K562 (cell line): ENCODE measurements at regions of chr15 and their contacts with region 1.

Region 1: DNA sequence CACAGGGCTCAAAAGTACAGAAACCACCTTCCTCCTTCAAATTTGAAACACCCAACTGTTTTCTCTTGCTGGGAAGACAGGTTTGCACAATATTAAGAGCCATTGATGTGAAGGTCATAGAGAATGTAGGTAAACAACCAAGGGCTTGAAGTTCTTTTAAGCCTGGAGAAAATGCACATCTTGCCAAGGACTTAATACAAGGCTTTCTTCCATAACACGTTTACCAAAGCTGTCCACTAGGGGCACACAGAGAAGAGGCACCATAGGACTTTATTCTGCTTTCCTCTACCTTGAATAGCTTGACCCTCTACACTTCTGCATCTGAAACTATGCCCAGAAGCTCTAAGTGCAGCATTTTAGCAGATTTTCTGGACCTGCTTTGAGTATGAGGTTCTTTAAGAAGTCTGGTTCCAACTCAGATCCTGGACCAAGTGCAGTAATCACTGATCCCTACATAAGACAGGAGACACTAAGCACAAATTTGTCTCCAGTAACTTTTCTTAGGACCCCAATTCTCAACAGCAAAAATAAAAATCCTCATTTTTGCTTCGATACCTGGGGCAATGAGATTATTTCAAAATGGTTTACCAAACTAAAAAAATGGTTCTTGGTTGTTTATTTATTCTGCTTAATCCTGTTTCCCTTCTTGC is 138.0 kb downstream of the FBN1 start:
- DNase-seq: peak; percentile 22 to 62 (median 33)
- ATAC-seq: peak; percentile 95
- H3K4me3 ChIP-seq: no peak overlapping the region
- H3K27ac ChIP-seq: no peak overlapping the region
- H3K4me1 ChIP-seq: no peaks in the 10 kb centered on the region
- H3K27me3 ChIP-seq: no peaks in the 10 kb centered on the region; a peak in 1 of 5 replicates
- CTCF ChIP-seq: peak; percentile 49 to 70 (median 66); a peak in 5 of 6 replicates
- EP300 ChIP-seq: no peak
- POLR2A ChIP-seq: no peak
- RAD21 ChIP-seq: peak; percentile 26 to 52

Region 2: DNA sequence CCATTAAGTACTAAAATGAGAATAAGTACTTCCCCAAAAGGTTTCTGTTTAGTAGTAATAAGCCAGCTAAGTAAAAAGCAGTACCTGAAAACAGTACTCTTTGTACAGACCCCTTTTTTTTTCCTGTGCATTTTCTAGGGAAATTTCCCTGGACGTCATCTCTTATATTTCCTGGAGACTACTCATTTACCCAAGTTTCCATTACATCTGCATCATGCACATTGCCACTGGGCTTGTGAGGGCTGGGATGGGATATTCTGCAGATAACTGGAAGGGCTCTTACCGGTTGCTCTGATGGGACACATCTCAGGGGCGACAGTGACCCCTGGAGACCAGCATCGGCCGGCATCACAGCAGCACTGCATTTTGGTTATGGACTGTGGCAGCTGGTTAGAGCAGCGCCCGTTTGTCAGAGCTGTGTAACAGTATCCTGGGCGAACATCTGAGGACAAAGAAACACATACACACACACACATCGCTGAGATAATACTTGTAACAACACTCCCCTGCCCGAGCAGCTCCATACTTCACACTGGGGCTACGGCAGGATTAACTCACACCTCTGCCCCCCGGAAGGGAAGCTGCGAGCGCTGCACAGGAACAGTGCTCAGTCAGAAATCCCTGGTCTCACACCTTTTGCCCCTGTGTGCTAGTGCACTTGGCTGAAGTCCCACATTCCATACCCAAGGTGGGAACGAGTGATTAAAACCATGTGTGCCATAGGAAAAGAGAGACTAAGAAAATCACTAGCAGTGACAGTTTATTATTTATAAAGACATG is 13.0 kb after region 1 on chr15:
- CTCF ChIA-PET with region 1: no interaction called
- POLR2A ChIA-PET with region 1: no interaction called
- in situ Hi-C with region 1: no loop called
- intact Hi-C with region 1: no loop called
- DNase-seq: peak in 2 of 4 experiments; percentile 15 to 34
- ATAC-seq: peak; percentile 90
- H3K4me3 ChIP-seq: no peak overlapping the region
- H3K27ac ChIP-seq: no peak overlapping the region
- H3K4me1 ChIP-seq: no peaks in the 10 kb centered on the region
- H3K27me3 ChIP-seq: no peaks in the 10 kb centered on the region; a peak in 1 of 5 replicates
- CTCF ChIP-seq: peak; percentile 38 to 47 (median 41); a peak in 5 of 6 replicates
- EP300 ChIP-seq: no peak
- POLR2A ChIP-seq: no peak
- RAD21 ChIP-seq: peak in 1 of 2 experiments; percentile 48; a peak in 2 of 4 replicates

Region 3: GRCh38 chr15:48559285-48559684 is 51.7 kb after region 1 on chr15:
- CTCF ChIA-PET with region 1: no interaction called
- POLR2A ChIA-PET with region 1: no interaction called
- in situ Hi-C with region 1: no loop called
- intact Hi-C with region 1: no loop called
- DNase-seq: no peak
- ATAC-seq: no peak
- H3K4me3 ChIP-seq: no peak overlapping the region
- H3K27ac ChIP-seq: no peak overlapping the region
- H3K4me1 ChIP-seq: peaks cover 0 to 10% of the 10 kb centered on the region in 2 experiments; a peak in 2 of 5 replicates
- H3K27me3 ChIP-seq: peaks cover 0 to 4% of the 10 kb centered on the region in 2 experiments; a peak in 1 of 5 replicates
- CTCF ChIP-seq: no peak
- EP300 ChIP-seq: no peak
- POLR2A ChIP-seq: no peak
- RAD21 ChIP-seq: no peak

Region 4: DNA sequence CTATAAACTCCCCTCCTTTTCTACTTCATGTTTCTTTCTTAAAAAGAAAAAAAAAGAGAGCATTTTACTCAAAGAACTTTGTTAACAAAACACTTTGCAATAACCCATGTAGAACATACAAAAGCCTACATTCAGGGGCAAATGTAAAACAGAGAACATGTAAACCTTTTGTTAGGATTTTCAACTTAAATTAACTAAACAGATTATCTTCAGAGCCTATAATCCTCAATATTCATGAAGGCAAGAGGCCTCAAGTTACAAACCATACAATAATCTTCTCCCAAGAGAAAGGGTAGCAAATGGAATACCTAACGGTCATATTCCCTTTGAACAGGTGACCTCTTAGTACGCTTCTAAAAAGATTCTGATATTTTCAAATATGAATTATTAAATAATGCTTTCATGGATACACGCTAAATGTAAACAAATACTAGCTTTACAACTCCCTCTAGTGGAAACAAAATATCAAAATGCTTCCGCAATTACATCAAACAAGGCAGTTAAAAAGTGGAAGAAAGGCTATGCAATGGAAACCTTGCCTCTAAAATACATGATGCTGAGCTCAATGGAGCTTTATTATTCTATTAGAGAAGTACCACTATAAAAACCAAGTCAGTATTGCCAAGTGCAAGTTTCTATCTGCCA is 293.4 kb after region 1 on chr15:
- CTCF ChIA-PET with region 1: no interaction called
- POLR2A ChIA-PET with region 1: no interaction called
- in situ Hi-C with region 1: no loop called
- intact Hi-C with region 1: loop called (anchors 10 kb)
- DNase-seq: peak in 2 of 4 experiments; percentile 10 to 13
- ATAC-seq: peak; percentile 50; the same call in 1 of the 3 replicates
- H3K4me3 ChIP-seq: no peak overlapping the region
- H3K27ac ChIP-seq: no peak overlapping the region
- H3K4me1 ChIP-seq: peaks cover 0 to under 1% of the 10 kb centered on the region in 2 experiments; a peak in 1 of 5 replicates
- H3K27me3 ChIP-seq: no peaks in the 10 kb centered on the region
- CTCF ChIP-seq: peak in 1 of 3 experiments; percentile 62; a peak in 4 of 6 replicates
- EP300 ChIP-seq: no peak
- POLR2A ChIP-seq: no peak
- RAD21 ChIP-seq: peak; percentile 63 to 68